ENCODE measurements at regions of chr1 and their contacts with region 1.

Region 1: GRCh38 chr1:167273027-167273800 is 52.5 kb downstream of the POU2F1 start:
- DNase-seq: no peak
- ATAC-seq: no peak
- H3K4me3 ChIP-seq: no peak overlapping the region
- H3K27ac ChIP-seq: no peak overlapping the region
- H3K4me1 ChIP-seq: peaks cover 5% of the 10 kb centered on the region
- H3K27me3 ChIP-seq: no peaks in the 10 kb centered on the region
- CTCF ChIP-seq: no peak
- EP300 ChIP-seq: no peak
- POLR2A ChIP-seq: no peak
- RAD21 ChIP-seq: no peak

Region 2: DNA sequence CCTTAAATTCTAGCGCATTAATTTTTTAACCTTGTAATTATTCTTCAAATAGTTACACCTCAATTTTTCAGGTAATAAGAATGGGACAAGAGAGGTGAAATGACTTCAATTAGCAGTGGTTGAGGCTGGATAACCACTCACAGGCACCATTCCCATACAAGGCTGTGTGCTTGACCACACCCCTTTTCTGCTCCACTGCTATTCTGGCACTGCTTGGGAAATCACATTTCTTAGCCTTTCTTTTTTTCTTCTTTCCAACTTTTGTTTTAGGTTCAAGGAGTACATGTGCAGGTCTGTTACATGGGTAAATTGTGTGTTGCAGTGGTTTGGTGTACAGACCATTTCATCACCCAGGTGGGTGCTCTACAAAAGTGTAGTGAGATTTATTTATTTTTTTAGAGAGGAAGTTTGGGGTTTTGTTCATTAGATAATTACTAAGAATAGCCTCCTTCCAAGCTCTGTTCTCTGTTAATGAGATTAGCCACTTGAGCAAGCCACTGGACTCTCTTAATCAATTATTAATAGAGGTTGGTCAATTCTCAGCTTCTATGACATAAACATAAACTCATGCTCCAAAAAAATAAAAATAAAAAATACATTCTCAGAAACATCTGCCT is 312.2 kb before region 1 on chr1:
- CTCF ChIA-PET with region 1: no interaction called
- POLR2A ChIA-PET with region 1: no interaction called
- in situ Hi-C with region 1: no loop called
- intact Hi-C with region 1: no loop called
- DNase-seq: no peak
- ATAC-seq: no peak
- H3K4me3 ChIP-seq: no peak overlapping the region
- H3K27ac ChIP-seq: no peak overlapping the region
- H3K4me1 ChIP-seq: no peaks in the 10 kb centered on the region
- H3K27me3 ChIP-seq: no peaks in the 10 kb centered on the region
- CTCF ChIP-seq: no peak
- EP300 ChIP-seq: no peak
- POLR2A ChIP-seq: no peak
- RAD21 ChIP-seq: no peak

Region 3: DNA sequence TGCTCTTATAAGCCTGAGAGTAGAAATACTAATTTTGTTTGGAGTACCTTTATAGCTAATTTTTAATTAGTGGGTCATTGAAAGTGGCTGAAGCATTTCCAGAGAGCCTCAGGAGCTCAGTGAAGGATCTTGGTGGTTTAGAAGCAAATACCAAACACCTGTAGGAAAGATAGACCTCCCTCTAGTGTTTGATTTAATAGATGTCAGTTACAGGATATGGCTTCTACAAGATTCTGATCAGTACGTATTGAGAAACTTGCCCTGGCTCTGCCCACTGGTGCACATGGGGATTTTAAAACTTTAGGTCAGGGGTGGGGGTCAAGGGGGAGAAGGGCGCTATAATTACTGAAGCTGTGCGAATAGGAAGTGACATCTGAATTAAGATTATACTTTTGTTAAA is 69.6 kb after region 1 on chr1:
- CTCF ChIA-PET with region 1: interaction called, 12 read pairs
- POLR2A ChIA-PET with region 1: no interaction called
- in situ Hi-C with region 1: loop called (anchors 5 kb)
- intact Hi-C with region 1: loop called (anchors 1 kb)
- DNase-seq: peak; percentile 19
- ATAC-seq: peak; percentile 60
- H3K4me3 ChIP-seq: no peak overlapping the region
- H3K27ac ChIP-seq: no peak overlapping the region
- H3K4me1 ChIP-seq: peaks cover 16% of the 10 kb centered on the region
- H3K27me3 ChIP-seq: no peaks in the 10 kb centered on the region
- CTCF ChIP-seq: peak; percentile 47
- EP300 ChIP-seq: no peak
- POLR2A ChIP-seq: no peak
- RAD21 ChIP-seq: 0 out of 2 replicates have a peak, but pooled peaks have one; percentile 31

Region 4: GRCh38 chr1:167409183-167409582 is 136.0 kb after region 1 on chr1:
- CTCF ChIA-PET with region 1: interaction called, 10 read pairs
- POLR2A ChIA-PET with region 1: no interaction called
- in situ Hi-C with region 1: loop called (anchors 5 kb)
- intact Hi-C with region 1: no loop called
- DNase-seq: peak; percentile 24
- ATAC-seq: peak; percentile 86
- H3K4me3 ChIP-seq: no peak overlapping the region
- H3K27ac ChIP-seq: no peak overlapping the region
- H3K4me1 ChIP-seq: no peaks in the 10 kb centered on the region
- H3K27me3 ChIP-seq: no peaks in the 10 kb centered on the region
- CTCF ChIP-seq: peak; percentile 48
- EP300 ChIP-seq: no peak
- POLR2A ChIP-seq: no peak
- RAD21 ChIP-seq: no peak

Region 5: GRCh38 chr1:167442124-167442848 is 169.1 kb after region 1 on chr1:
- CTCF ChIA-PET with region 1: interaction called, 21 read pairs
- POLR2A ChIA-PET with region 1: no interaction called
- in situ Hi-C with region 1: no loop called
- intact Hi-C with region 1: loop called (anchors 1 kb)
- DNase-seq: peak; percentile 70
- ATAC-seq: peak; percentile 95
- H3K4me3 ChIP-seq: peak overlapping the region in 1 of 3 experiments; percentile 36; a peak in 1 of 6 replicates
- H3K27ac ChIP-seq: no peak overlapping the region
- H3K4me1 ChIP-seq: peaks cover 20% of the 10 kb centered on the region
- H3K27me3 ChIP-seq: peaks cover 0 to 32% of the 10 kb centered on the region in 2 experiments; a peak in 2 of 5 replicates
- CTCF ChIP-seq: peak; percentile 97
- EP300 ChIP-seq: no peak
- POLR2A ChIP-seq: no peak
- RAD21 ChIP-seq: peak; percentile 87

Region 6: DNA sequence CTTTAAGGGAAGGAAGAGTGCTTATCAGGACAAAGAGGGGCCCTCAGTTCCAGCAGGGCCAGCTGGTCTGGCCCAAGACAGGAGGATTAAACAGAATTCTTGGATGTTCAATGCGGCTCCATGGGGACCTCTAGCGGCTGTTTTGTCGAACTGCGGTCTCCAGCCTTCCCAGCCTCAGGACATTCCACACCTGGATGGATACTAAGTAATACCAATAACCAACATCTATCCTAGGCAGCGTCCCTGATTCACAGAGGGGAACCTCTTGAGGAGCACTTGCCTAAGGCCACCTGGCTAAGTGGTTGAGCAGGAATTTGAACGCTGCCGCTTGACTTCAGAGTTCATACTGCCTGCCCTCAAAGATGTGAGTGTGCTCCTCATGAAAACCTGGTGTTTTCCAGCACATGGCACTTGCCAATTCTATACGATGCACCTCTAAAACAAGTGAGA is 260.7 kb after region 1 on chr1:
- CTCF ChIA-PET with region 1: interaction called, 4 read pairs
- POLR2A ChIA-PET with region 1: no interaction called
- in situ Hi-C with region 1: loop called (anchors 25 kb)
- intact Hi-C with region 1: loop called (anchors 5 kb)
- DNase-seq: peak; percentile 54
- ATAC-seq: peak; percentile 83
- H3K4me3 ChIP-seq: no peak overlapping the region
- H3K27ac ChIP-seq: no peak overlapping the region
- H3K4me1 ChIP-seq: peaks cover 28% of the 10 kb centered on the region
- H3K27me3 ChIP-seq: no peaks in the 10 kb centered on the region
- CTCF ChIP-seq: peak; percentile 85
- EP300 ChIP-seq: no peak
- POLR2A ChIP-seq: no peak
- RAD21 ChIP-seq: peak; percentile 72

Measured in HepG2 (cell line).